ENCODE measurements at regions of chr6 and their contacts with region 1.

Region 1: GRCh38 chr6:27809939-27810767 is 102.0 kb downstream of the OR2B2 start:
- DNase-seq: peak; percentile 97
- H3K4me3 ChIP-seq: peak overlapping the region; percentile 70
- H3K27ac ChIP-seq: peak overlapping the region; percentile 83
- H3K4me1 ChIP-seq: peaks cover 18% of the 10 kb centered on the region
- H3K27me3 ChIP-seq: no peaks in the 10 kb centered on the region
- CTCF ChIP-seq: peak; percentile 30; the same call in 1 of the 2 replicates

Region 2: DNA sequence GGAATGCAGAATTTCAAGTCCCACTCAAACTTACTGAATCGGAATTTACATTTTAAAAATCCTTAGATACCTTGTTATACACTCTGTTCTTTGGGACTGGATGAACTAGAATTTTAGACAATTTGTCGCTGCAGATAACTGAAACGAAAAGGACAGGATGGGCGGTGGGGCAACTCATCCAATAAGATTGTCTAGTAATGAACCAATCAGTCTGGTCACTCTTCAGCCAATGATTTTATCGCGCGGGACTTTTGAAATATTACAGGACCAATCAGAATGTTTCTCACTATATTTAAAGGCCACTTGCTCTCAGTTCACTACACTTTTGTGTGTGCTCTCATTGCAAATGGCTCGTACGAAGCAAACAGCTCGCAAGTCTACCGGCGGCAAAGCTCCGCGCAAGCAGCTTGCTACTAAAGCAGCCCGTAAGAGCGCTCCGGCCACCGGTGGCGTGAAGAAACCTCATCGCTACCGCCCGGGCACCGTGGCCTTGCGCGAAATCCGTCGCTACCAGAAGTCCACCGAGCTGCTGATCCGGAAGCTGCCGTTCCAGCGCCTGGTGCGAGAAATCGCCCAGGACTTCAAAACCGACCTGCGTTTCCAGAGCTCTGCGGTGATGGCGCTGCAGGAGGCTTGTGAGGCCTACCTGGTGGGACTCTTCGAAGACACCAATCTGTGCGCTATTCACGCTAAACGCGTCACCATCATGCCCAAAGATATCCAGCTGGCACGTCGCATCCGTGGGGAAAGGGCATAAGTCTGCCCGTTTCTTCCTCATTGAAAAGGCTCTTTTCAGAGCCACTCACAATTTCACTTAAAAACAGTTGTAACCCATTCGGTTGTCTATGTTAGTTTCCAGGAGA is 1764.9 kb before region 1 on chr6:
- CTCF ChIA-PET with region 1: no interaction called
- POLR2A ChIA-PET with region 1: no interaction called
- intact Hi-C with region 1: loop called (anchors 10 kb)
- DNase-seq: peak; percentile 93
- H3K4me3 ChIP-seq: peak overlapping the region; percentile 42
- H3K27ac ChIP-seq: peak overlapping the region; percentile 80
- H3K4me1 ChIP-seq: peaks cover 7% of the 10 kb centered on the region
- H3K27me3 ChIP-seq: no peaks in the 10 kb centered on the region
- CTCF ChIP-seq: 0 out of 2 replicates have a peak, but pooled peaks have one; percentile 19

Region 3: DNA sequence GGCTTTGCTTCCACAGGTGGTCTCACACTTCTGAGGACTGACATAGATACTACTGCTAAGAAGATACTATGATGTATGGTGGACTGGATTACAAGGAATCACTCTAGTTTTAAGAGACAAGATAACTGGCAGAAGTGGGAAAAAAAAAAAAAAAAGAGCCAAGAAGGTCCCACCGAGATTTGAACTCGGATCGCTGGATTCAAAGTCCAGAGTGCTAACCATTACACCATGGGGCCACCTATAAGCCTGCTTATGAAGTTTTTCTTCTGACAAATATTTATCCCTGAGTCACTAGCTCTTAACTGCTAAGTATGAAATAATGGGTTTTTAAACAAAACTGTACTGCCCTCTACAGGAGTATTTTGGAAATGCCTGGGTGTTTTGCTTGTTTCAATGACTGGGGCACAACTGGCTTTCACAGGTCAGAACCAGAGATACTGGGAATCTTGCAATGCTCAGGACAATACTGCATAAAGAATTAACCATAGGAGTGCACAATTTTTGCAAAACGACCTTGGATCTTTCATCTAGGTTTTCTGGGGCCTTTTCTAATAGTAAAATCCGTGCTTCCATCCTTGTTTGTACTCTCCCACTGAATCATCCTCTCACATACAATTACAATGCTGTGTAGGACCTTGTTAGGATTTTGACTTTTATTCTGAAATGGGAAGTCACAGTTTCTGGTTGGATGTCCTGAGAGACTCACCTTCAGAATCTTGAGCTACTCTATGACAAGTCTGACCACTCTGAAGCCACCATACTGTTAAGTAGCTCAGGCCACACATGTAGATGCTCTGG is 14.3 kb before region 1 on chr6:
- CTCF ChIA-PET with region 1: no interaction called
- POLR2A ChIA-PET with region 1: interaction called, 20 read pairs
- intact Hi-C with region 1: no loop called
- DNase-seq: peak; percentile 93
- H3K4me3 ChIP-seq: no peak overlapping the region
- H3K27ac ChIP-seq: no peak overlapping the region
- H3K4me1 ChIP-seq: no peaks in the 10 kb centered on the region
- H3K27me3 ChIP-seq: no peaks in the 10 kb centered on the region
- CTCF ChIP-seq: peak; percentile 76

Region 4: GRCh38 chr6:27838058-27838944 is 28.1 kb after region 1 on chr6:
- CTCF ChIA-PET with region 1: no interaction called
- POLR2A ChIA-PET with region 1: interaction called, 16 read pairs
- intact Hi-C with region 1: no loop called
- DNase-seq: peak; percentile 98
- H3K4me3 ChIP-seq: peak overlapping the region; percentile 57
- H3K27ac ChIP-seq: peak overlapping the region; percentile 97
- H3K4me1 ChIP-seq: peaks cover 7% of the 10 kb centered on the region
- H3K27me3 ChIP-seq: no peaks in the 10 kb centered on the region
- CTCF ChIP-seq: no peak

Region 5: DNA sequence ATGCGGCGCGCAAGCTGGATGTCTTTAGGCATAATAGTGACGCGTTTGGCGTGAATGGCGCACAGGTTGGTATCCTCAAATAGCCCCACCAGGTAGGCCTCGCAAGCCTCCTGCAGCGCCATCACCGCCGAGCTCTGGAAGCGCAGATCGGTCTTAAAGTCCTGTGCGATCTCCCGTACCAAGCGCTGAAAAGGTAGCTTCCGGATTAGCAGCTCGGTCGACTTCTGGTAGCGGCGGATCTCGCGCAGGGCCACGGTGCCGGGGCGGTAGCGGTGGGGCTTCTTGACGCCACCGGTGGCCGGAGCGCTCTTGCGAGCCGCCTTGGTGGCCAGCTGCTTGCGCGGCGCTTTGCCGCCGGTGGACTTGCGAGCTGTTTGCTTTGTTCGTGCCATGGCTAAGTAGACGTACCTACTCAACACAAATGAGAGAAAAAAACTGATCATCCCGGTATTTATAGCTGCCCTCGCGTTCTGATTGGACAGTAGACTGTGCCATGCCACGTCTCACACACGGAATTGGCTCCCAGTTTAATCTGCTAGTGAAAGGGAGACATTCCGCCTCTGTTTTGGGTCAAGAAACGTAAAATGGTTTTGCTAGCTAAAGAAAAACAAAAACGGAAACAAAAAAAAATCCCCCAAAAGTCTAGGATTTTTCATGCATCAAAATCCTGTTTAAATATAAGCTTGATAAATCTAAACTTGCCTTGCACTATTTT is 61.9 kb after region 1 on chr6:
- CTCF ChIA-PET with region 1: no interaction called
- POLR2A ChIA-PET with region 1: interaction called, 12 read pairs
- intact Hi-C with region 1: no loop called
- DNase-seq: peak; percentile 97
- H3K4me3 ChIP-seq: peak overlapping the region; percentile 62
- H3K27ac ChIP-seq: peak overlapping the region; percentile 93
- H3K4me1 ChIP-seq: peaks cover 12% of the 10 kb centered on the region
- H3K27me3 ChIP-seq: no peaks in the 10 kb centered on the region
- CTCF ChIP-seq: peak; percentile 37

Region 6: DNA sequence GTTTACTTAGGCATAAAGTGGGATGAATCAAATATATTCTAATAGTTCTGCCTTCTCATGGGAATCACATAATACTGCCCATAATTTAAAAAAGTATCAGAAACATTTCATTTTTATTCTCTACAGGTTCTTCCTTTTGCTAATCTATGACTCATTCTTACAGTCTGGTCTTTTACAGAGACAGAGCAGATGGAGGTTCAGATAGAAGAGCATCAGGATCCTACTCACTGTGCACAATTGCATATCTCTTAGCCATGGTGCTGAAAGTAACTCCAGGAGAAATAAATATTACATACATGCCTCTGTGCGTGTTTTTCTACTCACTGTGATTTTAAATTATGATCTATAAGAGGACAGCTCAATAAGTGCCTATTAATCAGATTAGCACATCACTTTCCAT is 130.6 kb after region 1 on chr6:
- CTCF ChIA-PET with region 1: no interaction called
- POLR2A ChIA-PET with region 1: no interaction called
- intact Hi-C with region 1: no loop called
- DNase-seq: peak; percentile 1
- H3K4me3 ChIP-seq: no peak overlapping the region
- H3K27ac ChIP-seq: no peak overlapping the region
- H3K4me1 ChIP-seq: no peaks in the 10 kb centered on the region
- H3K27me3 ChIP-seq: no peaks in the 10 kb centered on the region
- CTCF ChIP-seq: no peak

Region 7: DNA sequence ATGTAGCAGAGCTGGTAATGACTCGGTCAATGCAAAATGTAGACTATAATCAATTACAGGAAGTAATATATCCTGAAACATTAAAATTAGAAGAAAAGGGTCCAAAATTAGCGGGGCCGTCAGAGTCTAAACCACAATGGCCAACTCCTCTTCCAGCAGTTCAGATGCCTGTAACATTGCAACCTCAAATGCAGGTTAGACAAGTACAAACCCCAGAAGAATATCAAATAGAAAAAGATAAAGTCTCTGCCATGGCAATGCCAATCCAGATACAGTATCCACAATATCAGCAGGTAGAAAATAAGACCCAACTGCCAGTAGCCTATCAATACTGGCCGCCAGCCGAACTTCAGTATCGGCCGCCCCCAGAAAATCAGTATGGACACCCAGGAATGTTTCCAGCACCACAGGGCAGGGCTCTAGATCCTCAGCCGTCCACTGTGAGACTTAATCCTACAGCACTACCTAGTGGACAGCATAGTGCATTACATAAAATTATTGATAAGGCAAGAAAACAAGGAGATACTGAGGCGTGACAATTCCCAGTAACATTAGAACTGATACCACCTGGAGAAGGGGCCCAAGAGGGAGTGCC is 873.9 kb after region 1 on chr6:
- CTCF ChIA-PET with region 1: no interaction called
- POLR2A ChIA-PET with region 1: no interaction called
- intact Hi-C with region 1: no loop called
- DNase-seq: peak; percentile 76
- H3K4me3 ChIP-seq: peak overlapping the region; percentile 8
- H3K27ac ChIP-seq: no peak overlapping the region
- H3K4me1 ChIP-seq: peaks cover 9% of the 10 kb centered on the region
- H3K27me3 ChIP-seq: no peaks in the 10 kb centered on the region
- CTCF ChIP-seq: peak; percentile 70